Naive thymus-derived CD4-positive, alpha-beta T cell (primary cell): ENCODE measurements at regions of chr2 and their contacts with region 1.

Region 1: GRCh38 chr2:118882709-118883210 is 35.3 kb upstream of the EN1 start:
- DNase-seq: peak; percentile 27 to 74 (median 59)
- ATAC-seq: peak; percentile 92
- H3K4me3 ChIP-seq: peak overlapping the region; percentile 53
- H3K4me3 Mint-ChIP-seq: peak overlapping the region; percentile 49 to 84 (median 76)
- H3K27ac ChIP-seq: no peak overlapping the region
- H3K27ac Mint-ChIP-seq: peak overlapping the region in 7 of 9 donors; percentile 10 to 83 (median 75)
- H3K4me1 ChIP-seq: peaks cover 3 to 18% of the 10 kb centered on the region in 2 donors
- H3K4me1 Mint-ChIP-seq: peaks cover 7 to 24% (median 21%) of the 10 kb centered on the region in 7 donors
- H3K27me3 ChIP-seq: no peaks in the 10 kb centered on the region
- H3K27me3 Mint-ChIP-seq: peaks cover 0 to 17% (median 11%) of the 10 kb centered on the region in 5 donors

Region 2: GRCh38 chr2:118576109-118576855 is 306.5 kb before region 1 on chr2:
- CTCF ChIA-PET with region 1: no interaction called
- POLR2A ChIA-PET with region 1: no interaction called
- intact Hi-C with region 1: no loop called
- DNase-seq: no peak
- ATAC-seq: no peak
- H3K4me3 ChIP-seq: no peak overlapping the region
- H3K4me3 Mint-ChIP-seq: no peak overlapping the region
- H3K27ac ChIP-seq: no peak overlapping the region
- H3K27ac Mint-ChIP-seq: no peak overlapping the region
- H3K4me1 ChIP-seq: no peaks in the 10 kb centered on the region
- H3K4me1 Mint-ChIP-seq: peaks cover 0 to 2% (median 0%) of the 10 kb centered on the region in 7 donors
- H3K27me3 ChIP-seq: no peaks in the 10 kb centered on the region
- H3K27me3 Mint-ChIP-seq: peaks cover 0 to 24% (median 11%) of the 10 kb centered on the region in 5 donors

Region 3: DNA sequence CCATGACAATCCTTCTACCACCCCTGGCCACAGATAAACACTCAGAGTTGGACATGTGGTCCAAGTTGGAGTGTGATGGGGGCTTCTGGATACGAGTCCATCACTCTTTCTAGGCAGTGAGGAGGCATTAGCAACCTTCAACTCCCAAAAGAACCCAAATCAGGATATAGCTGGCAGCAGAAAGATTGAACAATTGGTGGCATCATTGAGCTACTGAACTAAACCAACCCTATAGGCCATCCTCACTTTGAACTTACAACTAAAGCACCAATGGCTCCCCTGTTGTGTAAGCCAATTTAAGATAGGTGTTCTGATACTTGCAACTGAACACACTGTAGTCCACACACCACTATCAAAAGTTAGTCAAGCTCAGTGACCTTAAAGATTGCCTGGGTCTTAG is 35.3 kb after region 1 on chr2:
- CTCF ChIA-PET with region 1: no interaction called
- POLR2A ChIA-PET with region 1: no interaction called
- intact Hi-C with region 1: no loop called
- DNase-seq: no peak
- ATAC-seq: no peak
- H3K4me3 ChIP-seq: no peak overlapping the region
- H3K4me3 Mint-ChIP-seq: no peak overlapping the region
- H3K27ac ChIP-seq: no peak overlapping the region
- H3K27ac Mint-ChIP-seq: no peak overlapping the region
- H3K4me1 ChIP-seq: no peaks in the 10 kb centered on the region
- H3K4me1 Mint-ChIP-seq: peaks cover 0 to 6% (median 2%) of the 10 kb centered on the region in 7 donors
- H3K27me3 ChIP-seq: no peaks in the 10 kb centered on the region
- H3K27me3 Mint-ChIP-seq: peaks cover 0 to 15% (median 0%) of the 10 kb centered on the region in 5 donors

Region 4: DNA sequence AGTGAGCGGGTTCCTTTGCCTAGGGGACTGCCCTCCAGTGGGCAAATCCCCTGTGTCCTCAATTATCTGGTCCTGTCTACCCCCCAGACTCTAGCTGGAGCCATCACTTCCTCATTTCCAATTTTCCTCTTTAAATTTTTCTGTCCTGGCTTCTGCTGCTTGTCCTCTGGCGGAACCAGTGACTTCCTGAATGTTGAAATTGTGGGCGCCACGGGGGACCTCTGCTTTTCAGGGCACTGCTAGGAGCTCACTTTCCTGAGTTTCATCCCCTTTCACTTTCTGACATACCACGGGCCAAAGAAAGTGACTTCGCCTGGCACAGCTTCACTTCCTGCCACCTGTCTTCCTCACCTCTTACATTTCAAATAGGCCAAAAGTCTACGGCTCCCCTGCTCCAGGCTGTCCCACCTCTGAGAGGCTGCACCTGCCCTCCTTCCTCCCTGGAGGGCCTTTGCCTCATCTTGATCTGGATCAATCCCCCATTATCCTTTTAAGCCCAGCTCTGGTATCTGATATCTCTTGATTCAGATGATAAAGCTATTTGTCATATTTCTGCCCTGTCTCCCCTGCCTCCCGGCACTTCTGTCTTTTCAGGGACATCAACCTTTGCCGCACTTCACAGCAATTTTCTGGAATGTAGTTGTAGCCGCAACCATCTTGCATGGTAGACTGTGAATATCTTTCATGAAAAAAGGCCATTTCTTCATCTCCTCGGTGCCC is 57.9 kb after region 1 on chr2:
- CTCF ChIA-PET with region 1: interaction called, 8 read pairs
- POLR2A ChIA-PET with region 1: no interaction called
- intact Hi-C with region 1: loop called in 1 of 2 experiments (anchors 1 kb)
- DNase-seq: peak in 1 of 9 donors; percentile 0
- ATAC-seq: peak; percentile 57
- H3K4me3 ChIP-seq: no peak overlapping the region
- H3K4me3 Mint-ChIP-seq: peak overlapping the region in 8 of 10 donors; percentile 29 to 62 (median 53)
- H3K27ac ChIP-seq: no peak overlapping the region
- H3K27ac Mint-ChIP-seq: peak overlapping the region in 5 of 9 donors; percentile 17 to 78 (median 59)
- H3K4me1 ChIP-seq: no peaks in the 10 kb centered on the region
- H3K4me1 Mint-ChIP-seq: peaks cover 0 to 17% (median 11%) of the 10 kb centered on the region in 7 donors
- H3K27me3 ChIP-seq: no peaks in the 10 kb centered on the region
- H3K27me3 Mint-ChIP-seq: peaks cover 0 to 8% (median 3%) of the 10 kb centered on the region in 5 donors

Region 5: GRCh38 chr2:119006441-119006840 is 123.7 kb after region 1 on chr2:
- CTCF ChIA-PET with region 1: interaction called, 6 read pairs
- POLR2A ChIA-PET with region 1: no interaction called
- intact Hi-C with region 1: loop called in 1 of 2 experiments (anchors 1 kb)
- DNase-seq: no peak
- ATAC-seq: no peak
- H3K4me3 ChIP-seq: no peak overlapping the region
- H3K4me3 Mint-ChIP-seq: no peak overlapping the region
- H3K27ac ChIP-seq: no peak overlapping the region
- H3K27ac Mint-ChIP-seq: no peak overlapping the region
- H3K4me1 ChIP-seq: no peaks in the 10 kb centered on the region
- H3K4me1 Mint-ChIP-seq: no peaks in the 10 kb centered on the region
- H3K27me3 ChIP-seq: no peaks in the 10 kb centered on the region
- H3K27me3 Mint-ChIP-seq: peaks cover 11 to 31% (median 24%) of the 10 kb centered on the region in 5 donors

Region 6: GRCh38 chr2:119126650-119127049 is 243.9 kb after region 1 on chr2:
- CTCF ChIA-PET with region 1: interaction called, 10 read pairs
- POLR2A ChIA-PET with region 1: no interaction called
- intact Hi-C with region 1: loop called in 1 of 2 experiments (anchors 1 kb)
- DNase-seq: peak in 6 of 9 donors; percentile 10 to 32 (median 12)
- ATAC-seq: peak; percentile 60
- H3K4me3 ChIP-seq: no peak overlapping the region
- H3K4me3 Mint-ChIP-seq: no peak overlapping the region
- H3K27ac ChIP-seq: no peak overlapping the region
- H3K27ac Mint-ChIP-seq: no peak overlapping the region
- H3K4me1 ChIP-seq: no peaks in the 10 kb centered on the region
- H3K4me1 Mint-ChIP-seq: peaks cover 0 to 4% (median 0%) of the 10 kb centered on the region in 7 donors
- H3K27me3 ChIP-seq: no peaks in the 10 kb centered on the region
- H3K27me3 Mint-ChIP-seq: peaks cover 5 to 56% (median 18%) of the 10 kb centered on the region in 5 donors

Region 7: GRCh38 chr2:119174216-119175037 is 291.7 kb after region 1 on chr2:
- CTCF ChIA-PET with region 1: interaction called, 8 read pairs
- POLR2A ChIA-PET with region 1: no interaction called
- intact Hi-C with region 1: loop called in 1 of 2 experiments (anchors 1 kb)
- DNase-seq: peak in 8 of 9 donors; percentile 9 to 53 (median 46)
- ATAC-seq: peak; percentile 76
- H3K4me3 ChIP-seq: no peak overlapping the region
- H3K4me3 Mint-ChIP-seq: no peak overlapping the region
- H3K27ac ChIP-seq: no peak overlapping the region
- H3K27ac Mint-ChIP-seq: peak overlapping the region in 1 of 9 donors; percentile 9
- H3K4me1 ChIP-seq: no peaks in the 10 kb centered on the region
- H3K4me1 Mint-ChIP-seq: no peaks in the 10 kb centered on the region
- H3K27me3 ChIP-seq: no peaks in the 10 kb centered on the region
- H3K27me3 Mint-ChIP-seq: peaks cover 0 to 2% (median 0%) of the 10 kb centered on the region in 5 donors

Region 8: DNA sequence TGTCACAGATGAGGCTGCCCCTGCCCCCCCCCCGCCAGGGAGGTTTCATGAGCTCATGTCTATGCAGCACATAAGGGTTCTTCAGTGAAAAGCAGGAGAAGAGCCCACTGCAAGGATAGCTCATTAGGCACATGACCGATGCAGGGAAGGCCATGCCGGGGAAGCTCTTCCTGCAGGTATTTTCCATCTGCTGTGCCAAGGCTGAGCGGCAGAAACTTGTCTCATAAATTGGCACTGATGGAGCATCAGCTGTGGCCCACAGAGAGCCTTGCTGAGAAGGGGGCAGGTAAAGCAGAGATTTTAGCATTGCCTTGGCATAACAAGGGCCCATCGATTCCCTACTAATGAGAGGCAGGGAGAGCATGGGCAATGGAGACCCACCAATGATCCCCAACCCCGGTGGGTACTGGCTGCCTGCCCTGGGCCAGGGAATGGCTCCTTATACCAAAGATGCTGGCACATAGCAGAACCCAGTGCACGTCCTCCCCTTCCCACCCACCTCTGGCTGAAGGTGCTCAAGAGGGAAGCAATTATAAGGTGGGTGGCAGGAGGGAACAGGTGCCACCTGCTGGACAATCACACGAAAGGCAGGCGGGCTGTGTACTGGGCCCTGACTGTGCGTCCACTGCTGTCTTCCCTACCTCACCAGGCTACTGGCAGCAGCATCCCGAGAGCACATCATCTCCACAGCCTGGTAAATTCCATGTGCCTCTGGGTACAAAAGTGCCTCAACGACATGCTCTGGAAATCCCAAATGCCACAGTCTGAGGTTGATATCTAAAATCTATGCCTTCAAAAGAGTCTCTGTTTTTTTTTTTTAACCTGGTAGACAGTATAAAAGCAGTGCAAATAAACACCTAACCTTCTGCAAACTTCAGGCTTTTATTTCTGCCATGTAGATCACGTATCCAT is 382.3 kb after region 1 on chr2:
- CTCF ChIA-PET with region 1: interaction called, 6 read pairs
- POLR2A ChIA-PET with region 1: no interaction called
- intact Hi-C with region 1: loop called in 1 of 2 experiments (anchors 2 kb)
- DNase-seq: peak in 4 of 9 donors; percentile 7 to 15 (median 12)
- ATAC-seq: peak; percentile 70
- H3K4me3 ChIP-seq: no peak overlapping the region
- H3K4me3 Mint-ChIP-seq: no peak overlapping the region
- H3K27ac ChIP-seq: no peak overlapping the region
- H3K27ac Mint-ChIP-seq: no peak overlapping the region
- H3K4me1 ChIP-seq: no peaks in the 10 kb centered on the region
- H3K4me1 Mint-ChIP-seq: peaks cover 0 to 2% (median 0%) of the 10 kb centered on the region in 7 donors
- H3K27me3 ChIP-seq: no peaks in the 10 kb centered on the region
- H3K27me3 Mint-ChIP-seq: peaks cover 0 to 10% (median 4%) of the 10 kb centered on the region in 5 donors